Colonic mucosa (tissue), 4 donors: ENCODE measurements at regions of chr1 and their contacts with region 1.

Region 1: DNA sequence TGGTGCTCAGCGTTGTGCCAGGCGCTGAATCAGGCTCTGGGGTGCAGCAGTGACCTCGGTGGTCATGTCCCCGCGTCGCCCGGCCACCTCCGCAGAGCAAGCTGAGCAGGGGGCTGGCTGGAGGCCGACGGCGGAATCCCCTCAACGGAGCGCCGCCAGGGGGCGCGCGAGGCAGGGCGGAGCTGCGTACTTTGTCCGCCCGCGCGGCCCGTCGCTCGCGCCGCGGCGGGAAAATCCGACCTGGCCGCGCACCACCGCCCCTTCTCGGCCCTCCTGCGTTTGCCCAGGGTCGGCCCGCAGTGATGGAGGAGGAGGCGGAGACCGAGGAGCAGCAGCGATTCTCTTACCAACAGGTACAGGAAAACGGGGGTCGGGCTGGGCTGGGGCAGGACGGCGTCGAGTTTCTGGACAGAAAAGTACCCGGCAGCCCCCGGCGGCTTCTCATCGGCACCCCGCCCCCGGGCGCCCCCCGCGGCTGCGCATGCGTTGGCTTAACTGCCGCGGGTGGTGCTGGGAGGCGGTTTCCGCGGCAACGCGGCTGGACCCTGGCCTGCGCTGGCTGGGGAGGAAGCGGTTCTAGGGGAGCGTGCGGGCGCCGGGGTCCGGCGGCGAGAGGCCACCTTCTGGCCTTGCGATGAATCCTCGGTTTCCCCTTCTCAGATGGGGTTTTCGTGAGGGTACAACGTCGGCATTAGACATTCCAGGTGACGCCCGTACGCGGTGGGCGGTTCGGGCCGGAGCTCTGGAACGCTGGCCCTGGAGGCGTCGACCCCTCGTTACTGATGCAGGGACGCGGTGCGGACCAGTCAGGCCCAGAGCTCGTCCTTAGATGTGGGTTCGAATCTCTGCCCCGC is at the start of gene CENPS:
- DNase-seq: peak; percentile 92
- H3K4me3 ChIP-seq: peak within 1 kb of the TSS; percentile 72
- H3K27ac ChIP-seq: peak within 1 kb of the TSS; percentile 21
- H3K4me1 ChIP-seq: peaks cover 4% of the 10 kb centered on the region
- H3K27me3 ChIP-seq: no peaks in the 10 kb centered on the region
- CTCF ChIP-seq: peak; percentile 95
- total RNA-seq, gene CENPS: 13.2 to 26.6 TPM

Region 2: GRCh38 chr1:10378081-10378841 is 52.2 kb before region 1 on chr1:
- intact Hi-C with region 1: loop called (anchors 1 kb)
- DNase-seq: no peak
- H3K4me3 ChIP-seq: no peak overlapping the region
- H3K27ac ChIP-seq: no peak overlapping the region
- H3K4me1 ChIP-seq: no peaks in the 10 kb centered on the region
- H3K27me3 ChIP-seq: no peaks in the 10 kb centered on the region
- CTCF ChIP-seq: no peak

Region 3: DNA sequence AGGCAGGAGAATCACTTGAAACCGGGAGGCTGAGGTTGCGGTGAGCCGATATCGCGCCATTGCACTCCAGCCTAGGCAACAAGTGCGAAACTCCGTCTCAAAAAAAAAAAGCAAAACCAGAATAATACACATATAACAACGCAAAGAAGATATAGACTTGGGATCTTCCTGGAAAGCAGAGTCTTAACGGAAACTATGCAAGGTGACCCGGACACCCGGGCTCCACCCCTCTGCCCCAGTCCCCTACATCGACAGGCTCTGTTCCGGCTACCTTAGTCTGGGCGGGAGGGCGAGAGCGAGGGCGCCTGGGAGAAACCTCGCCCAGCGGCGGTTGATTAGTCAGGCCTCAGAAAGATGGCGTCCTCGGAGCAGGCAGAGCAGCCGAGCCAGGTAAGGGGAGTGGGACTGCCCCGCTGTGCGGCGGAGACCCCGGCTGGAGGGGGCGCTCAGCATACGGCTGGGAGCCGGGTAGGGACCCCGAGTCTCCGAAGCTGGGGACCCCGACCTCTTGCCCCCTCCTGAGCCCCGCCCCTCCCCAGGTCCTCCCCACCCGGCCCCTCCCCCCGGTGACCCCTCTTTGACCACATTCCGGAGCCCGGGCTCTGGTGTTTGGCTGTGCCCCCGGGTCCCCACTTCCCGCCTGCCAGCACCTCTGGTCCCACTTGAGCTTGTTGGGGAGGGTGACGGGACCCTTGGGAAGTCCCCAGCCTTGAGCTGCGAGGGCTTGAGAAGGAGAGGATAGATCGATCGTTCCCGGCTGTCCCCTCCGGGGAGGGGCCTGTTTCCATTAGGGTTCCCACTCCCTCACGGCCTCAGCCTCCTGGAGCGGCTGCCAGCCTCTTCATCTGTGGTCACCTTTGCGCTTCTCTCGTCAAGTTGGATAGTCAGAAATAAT is 44.4 kb after region 1 on chr1 and contains the start of gene PEX14:
- intact Hi-C with region 1: loop called (anchors 5 kb)
- DNase-seq: peak; percentile 91
- H3K4me3 ChIP-seq: peak within 1 kb of the TSS; percentile 86
- H3K27ac ChIP-seq: peak within 1 kb of the TSS; percentile 73
- H3K4me1 ChIP-seq: peaks cover 12% of the 10 kb centered on the region
- H3K27me3 ChIP-seq: no peaks in the 10 kb centered on the region
- CTCF ChIP-seq: no peak
- total RNA-seq, gene PEX14: 19.5 to 29.3 TPM

Region 4: DNA sequence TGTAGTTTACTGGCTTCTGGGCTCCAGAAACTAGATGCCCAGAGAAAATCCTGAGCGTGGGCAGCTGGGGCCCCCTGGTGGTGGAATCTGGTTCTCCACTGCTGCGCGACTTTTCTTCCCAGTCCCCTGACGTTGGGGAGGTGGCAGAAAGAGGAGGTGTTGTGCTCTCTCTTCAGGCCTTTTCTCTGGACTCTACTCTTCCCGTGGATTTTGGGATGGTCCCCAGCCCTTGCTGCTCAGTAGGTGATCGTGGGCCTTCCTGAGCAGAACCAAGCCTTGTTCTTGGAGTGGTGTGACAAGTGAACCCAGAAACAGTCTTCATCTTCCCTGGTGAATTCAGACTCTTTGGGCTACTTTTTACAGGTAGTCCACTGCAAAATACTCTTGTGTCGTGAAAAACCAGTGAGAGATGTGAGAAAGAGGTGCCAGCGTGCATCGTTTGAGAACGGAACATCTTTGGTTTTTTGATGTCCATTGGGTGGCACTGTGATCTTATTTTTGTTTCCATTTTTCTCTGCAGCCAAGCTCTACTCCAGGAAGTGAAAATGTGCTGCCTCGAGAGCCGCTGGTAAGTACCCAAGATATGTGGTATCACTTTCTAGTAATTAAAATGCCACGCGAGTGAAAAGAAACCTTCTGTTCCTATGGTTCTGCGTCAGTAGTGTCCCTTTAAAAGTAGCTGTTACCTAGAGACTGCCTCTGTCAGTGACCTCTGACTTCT is 64.5 kb after region 1 on chr1:
- intact Hi-C with region 1: loop called (anchors 2 kb)
- DNase-seq: peak; percentile 87
- H3K4me3 ChIP-seq: peak overlapping the region; percentile 22
- H3K27ac ChIP-seq: peak overlapping the region; percentile 29
- H3K4me1 ChIP-seq: no peaks in the 10 kb centered on the region
- H3K27me3 ChIP-seq: no peaks in the 10 kb centered on the region
- CTCF ChIP-seq: peak; percentile 94